Common myeloid progenitor, CD34-positive (primary cell): ENCODE measurements at regions of chr22 and their contacts with region 1.

Region 1: GRCh38 chr22:28594797-28595462 is 84.7 kb downstream of the TTC28 start:
- DNase-seq: peak; percentile 65 to 80 (median 75)
- H3K4me3 ChIP-seq: no peak overlapping the region
- H3K27ac ChIP-seq: no peak overlapping the region
- H3K4me1 ChIP-seq: peaks cover 0 to 2% (median 0%) of the 10 kb centered on the region in 4 experiments
- H3K27me3 ChIP-seq: no peaks in the 10 kb centered on the region

Region 2: DNA sequence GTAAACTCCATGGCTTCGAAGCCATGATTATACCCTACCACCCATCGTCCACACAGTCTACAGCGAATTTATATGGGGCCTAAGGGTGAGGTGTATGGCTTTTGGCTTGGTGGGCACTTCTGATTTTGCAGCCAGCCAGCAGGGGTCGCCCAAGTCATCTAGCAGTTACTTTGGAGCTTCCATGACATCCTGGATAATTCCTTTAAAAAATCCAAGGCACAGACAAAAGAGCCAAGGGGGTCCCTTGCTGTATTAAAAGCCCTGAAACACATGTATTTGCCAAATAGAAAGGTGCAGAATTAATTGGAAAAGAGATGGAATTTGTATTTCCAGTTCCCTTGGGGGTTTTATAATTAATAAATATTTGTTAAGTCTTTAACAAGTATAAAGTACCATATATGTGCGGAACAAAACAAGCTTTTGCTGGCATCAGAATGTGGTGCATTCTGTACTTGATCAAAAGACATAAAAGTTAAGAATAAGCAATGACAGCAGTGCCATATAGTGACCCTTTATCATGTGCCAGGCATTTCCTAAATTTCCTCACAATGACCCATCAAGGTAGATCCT is 543.1 kb before region 1 on chr22:
- CTCF ChIA-PET with region 1: interaction called, 16 read pairs
- POLR2A ChIA-PET with region 1: no interaction called
- DNase-seq: peak; percentile 28 to 42 (median 35)
- H3K4me3 ChIP-seq: no peak overlapping the region
- H3K27ac ChIP-seq: no peak overlapping the region
- H3K4me1 ChIP-seq: peaks cover 0 to 16% (median 3%) of the 10 kb centered on the region in 4 experiments
- H3K27me3 ChIP-seq: no peaks in the 10 kb centered on the region

Region 3: GRCh38 chr22:28514321-28514821 is 80.6 kb before region 1 on chr22:
- CTCF ChIA-PET with region 1: no interaction called
- POLR2A ChIA-PET with region 1: no interaction called
- DNase-seq: no peak
- H3K4me3 ChIP-seq: no peak overlapping the region
- H3K27ac ChIP-seq: no peak overlapping the region
- H3K4me1 ChIP-seq: no peaks in the 10 kb centered on the region
- H3K27me3 ChIP-seq: no peaks in the 10 kb centered on the region